ENCODE measurements at regions of chr2 and their contacts with region 1.

Region 1: GRCh38 chr2:164560181-164560792 is 61.0 kb downstream of the GRB14 start:
- DNase-seq: peak; percentile 2
- H3K4me3 ChIP-seq: no peak overlapping the region
- H3K27ac ChIP-seq: no peak overlapping the region
- H3K4me1 ChIP-seq: no peaks in the 10 kb centered on the region
- H3K27me3 ChIP-seq: no peaks in the 10 kb centered on the region
- CTCF ChIP-seq: peak; percentile 58 to 70

Region 2: DNA sequence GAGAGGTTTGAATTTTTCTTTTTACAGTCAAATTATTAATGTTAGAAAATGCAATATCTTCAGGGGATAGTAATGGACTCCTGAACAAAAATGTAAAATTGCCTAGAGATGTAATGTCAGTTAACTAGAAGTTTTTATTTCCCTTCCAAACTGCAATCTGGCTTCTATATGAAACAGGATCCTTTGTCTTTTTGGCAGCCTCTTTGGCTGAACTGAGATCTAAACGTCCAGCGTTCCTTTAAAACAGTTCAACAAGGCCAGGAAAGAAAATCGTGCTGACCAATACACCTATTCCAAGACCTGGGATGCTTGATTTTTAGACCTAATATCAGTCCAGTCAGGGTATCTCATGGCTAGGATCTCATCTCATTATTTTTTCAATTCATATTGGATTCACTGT is 1070.0 kb before region 1 on chr2:
- CTCF ChIA-PET with region 1: no interaction called
- dilution Hi-C with region 1: no loop called
- in situ Hi-C with region 1: no loop called
- intact Hi-C with region 1: no loop called
- DNase-seq: no peak
- H3K4me3 ChIP-seq: no peak overlapping the region
- H3K27ac ChIP-seq: no peak overlapping the region
- H3K4me1 ChIP-seq: no peaks in the 10 kb centered on the region
- H3K27me3 ChIP-seq: peaks cover 3% of the 10 kb centered on the region
- CTCF ChIP-seq: no peak

Region 3: DNA sequence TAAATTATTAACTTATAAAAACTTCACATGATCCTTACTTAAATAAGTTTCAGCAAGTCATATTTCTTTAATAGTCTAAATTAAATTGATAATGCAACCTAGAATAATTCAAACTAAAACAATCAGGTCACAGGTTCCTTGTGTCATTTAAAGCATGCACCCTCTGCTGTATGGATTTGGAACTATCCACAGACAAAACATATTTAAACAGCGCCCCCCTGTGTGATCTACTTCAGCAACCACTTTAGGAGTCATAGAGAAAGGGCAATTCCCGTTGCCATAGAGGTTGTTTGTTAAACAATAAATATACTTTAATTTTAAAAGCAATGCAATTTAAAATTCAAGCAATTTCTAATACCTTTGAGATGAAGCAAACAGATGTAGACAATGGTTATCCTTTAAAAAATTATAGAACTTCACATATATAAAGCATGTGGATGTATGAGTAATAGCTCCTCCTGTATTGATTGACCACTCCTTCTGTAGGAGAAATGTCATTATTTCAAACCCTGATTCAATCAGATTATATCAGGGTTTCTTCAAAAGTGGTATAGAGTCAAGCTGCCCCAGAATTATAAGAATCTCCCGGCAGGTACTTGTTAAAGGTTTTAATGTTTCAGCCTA is 39.8 kb after region 1 on chr2:
- CTCF ChIA-PET with region 1: interaction called, 4 read pairs
- dilution Hi-C with region 1: no loop called
- in situ Hi-C with region 1: no loop called
- intact Hi-C with region 1: loop called (anchors 1 kb)
- DNase-seq: peak; percentile 70
- H3K4me3 ChIP-seq: no peak overlapping the region
- H3K27ac ChIP-seq: peak overlapping the region; percentile 59
- H3K4me1 ChIP-seq: no peaks in the 10 kb centered on the region
- H3K27me3 ChIP-seq: no peaks in the 10 kb centered on the region
- CTCF ChIP-seq: peak; percentile 95 to 96

Region 4: GRCh38 chr2:164657129-164657528 is 96.8 kb after region 1 on chr2:
- CTCF ChIA-PET with region 1: no interaction called
- dilution Hi-C with region 1: no loop called
- in situ Hi-C with region 1: no loop called
- intact Hi-C with region 1: loop called (anchors 1 kb)
- DNase-seq: peak; percentile 97
- H3K4me3 ChIP-seq: no peak overlapping the region
- H3K27ac ChIP-seq: peak overlapping the region; percentile 83
- H3K4me1 ChIP-seq: peaks cover 32% of the 10 kb centered on the region
- H3K27me3 ChIP-seq: no peaks in the 10 kb centered on the region
- CTCF ChIP-seq: no peak

Region 5: GRCh38 chr2:164717000-164717803 is 156.9 kb after region 1 on chr2:
- CTCF ChIA-PET with region 1: no interaction called
- dilution Hi-C with region 1: no loop called
- in situ Hi-C with region 1: no loop called
- intact Hi-C with region 1: loop called (anchors 2 kb)
- DNase-seq: no peak
- H3K4me3 ChIP-seq: no peak overlapping the region
- H3K27ac ChIP-seq: no peak overlapping the region
- H3K4me1 ChIP-seq: peaks cover 19% of the 10 kb centered on the region
- H3K27me3 ChIP-seq: no peaks in the 10 kb centered on the region
- CTCF ChIP-seq: peak; percentile 45 to 59

Region 6: GRCh38 chr2:164917296-164917903 is 357.1 kb after region 1 on chr2:
- CTCF ChIA-PET with region 1: no interaction called
- dilution Hi-C with region 1: no loop called
- in situ Hi-C with region 1: no loop called
- intact Hi-C with region 1: loop called (anchors 10 kb)
- DNase-seq: peak; percentile 49
- H3K4me3 ChIP-seq: no peak overlapping the region
- H3K27ac ChIP-seq: no peak overlapping the region
- H3K4me1 ChIP-seq: peaks cover 22% of the 10 kb centered on the region
- H3K27me3 ChIP-seq: no peaks in the 10 kb centered on the region
- CTCF ChIP-seq: peak; percentile 44 to 79

Measured in mammary epithelial cell (primary cell).